Activated naive CD4-positive, alpha-beta T cell treated with anti-CD3 and anti-CD28 coated beads for 36 hours (primary cell): ENCODE measurements at regions of chr5 and their contacts with region 1.

Region 1: GRCh38 chr5:73160239-73160671 is 12.7 kb upstream of the TMEM174 start:
- DNase-seq: peak; percentile 95
- H3K4me3 Mint-ChIP-seq: no peak overlapping the region
- H3K27ac Mint-ChIP-seq: no peak overlapping the region
- H3K4me1 Mint-ChIP-seq: peaks cover 36% of the 10 kb centered on the region
- H3K27me3 Mint-ChIP-seq: peaks cover 78% of the 10 kb centered on the region

Region 2: DNA sequence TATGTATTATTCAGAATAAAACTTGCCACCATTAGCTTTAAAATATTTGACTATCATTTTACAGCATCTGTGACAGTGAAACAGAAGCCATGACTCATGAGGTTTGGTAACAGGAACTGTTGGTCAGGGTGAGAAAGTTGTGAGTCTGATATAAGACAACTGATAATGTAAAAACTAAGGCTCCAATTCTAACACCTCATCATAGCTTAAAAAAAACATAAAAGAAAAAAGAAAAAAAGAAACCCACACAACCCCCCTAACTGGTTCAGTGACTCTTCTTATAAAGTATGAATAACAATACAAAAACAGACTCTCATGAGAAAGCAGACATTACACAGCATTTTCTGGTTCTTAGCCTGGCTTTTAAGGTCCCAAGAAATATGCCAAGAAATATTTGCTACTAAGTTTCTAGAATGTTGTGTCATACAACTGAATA is 926.0 kb before region 1 on chr5:
- CTCF ChIA-PET with region 1: no interaction called
- intact Hi-C with region 1: loop called (anchors 5 kb)
- DNase-seq: peak; percentile 47
- H3K4me3 Mint-ChIP-seq: no peak overlapping the region
- H3K27ac Mint-ChIP-seq: peak overlapping the region; percentile 30
- H3K4me1 Mint-ChIP-seq: peaks cover 46% of the 10 kb centered on the region
- H3K27me3 Mint-ChIP-seq: no peaks in the 10 kb centered on the region

Region 3: GRCh38 chr5:72991394-72991793 is 168.9 kb before region 1 on chr5:
- CTCF ChIA-PET with region 1: no interaction called
- intact Hi-C with region 1: loop called (anchors 1 kb)
- DNase-seq: no peak
- H3K4me3 Mint-ChIP-seq: no peak overlapping the region
- H3K27ac Mint-ChIP-seq: no peak overlapping the region
- H3K4me1 Mint-ChIP-seq: no peaks in the 10 kb centered on the region
- H3K27me3 Mint-ChIP-seq: peaks cover 25% of the 10 kb centered on the region

Region 4: DNA sequence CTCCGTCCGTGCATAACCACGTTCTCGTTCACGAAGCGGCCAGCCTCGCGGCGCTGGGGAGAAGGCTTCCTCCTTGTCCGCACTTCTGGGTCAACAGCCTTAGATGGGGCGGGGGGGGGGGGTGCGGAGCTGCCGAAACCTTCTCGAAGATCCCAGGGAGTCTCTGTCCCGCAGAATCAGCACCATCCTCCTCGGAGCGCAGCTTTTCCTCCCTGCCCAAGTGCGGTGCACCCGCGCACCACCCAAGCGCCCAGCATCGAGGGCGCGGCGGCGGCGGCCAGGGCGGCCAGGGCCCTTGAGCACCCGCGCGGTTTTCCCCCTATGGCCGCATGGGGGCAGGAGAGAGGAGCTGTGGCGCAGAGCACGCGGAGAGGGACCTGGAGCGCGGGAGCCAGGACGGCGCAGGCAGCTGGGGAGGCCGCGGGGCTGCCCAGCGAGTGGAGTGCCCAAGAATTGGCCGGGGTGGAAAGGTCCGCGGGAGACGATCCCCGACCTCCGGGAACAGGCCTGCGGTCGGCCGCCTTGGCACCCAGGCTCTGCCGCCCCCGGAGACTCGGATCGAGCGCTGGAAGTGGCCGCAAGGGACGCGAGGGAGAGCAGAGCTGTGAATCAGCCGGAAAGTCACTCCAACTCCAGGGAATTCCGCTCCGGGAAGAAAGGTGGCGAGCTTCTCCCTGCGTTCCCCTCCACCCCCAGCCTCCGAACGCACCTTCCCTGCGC is 55.8 kb after region 1 on chr5:
- CTCF ChIA-PET with region 1: no interaction called
- intact Hi-C with region 1: loop called (anchors 1 kb)
- DNase-seq: peak; percentile 77
- H3K4me3 Mint-ChIP-seq: no peak overlapping the region
- H3K27ac Mint-ChIP-seq: no peak overlapping the region
- H3K4me1 Mint-ChIP-seq: peaks cover 17% of the 10 kb centered on the region
- H3K27me3 Mint-ChIP-seq: peaks cover 84% of the 10 kb centered on the region

Region 5: GRCh38 chr5:73498057-73499008 is 338.1 kb after region 1 on chr5 and contains the start of gene BTF3:
- CTCF ChIA-PET with region 1: no interaction called
- intact Hi-C with region 1: loop called (anchors 5 kb)
- DNase-seq: peak; percentile 95
- H3K4me3 Mint-ChIP-seq: peak within 1 kb of the TSS; percentile 97
- H3K27ac Mint-ChIP-seq: peak within 1 kb of the TSS; percentile 96
- H3K4me1 Mint-ChIP-seq: peaks cover 42% of the 10 kb centered on the region
- H3K27me3 Mint-ChIP-seq: peaks cover 3% of the 10 kb centered on the region
- total RNA-seq, gene BTF3: 1,100 to 1,123 TPM

Region 6: GRCh38 chr5:73994963-73995362 is 834.7 kb after region 1 on chr5:
- CTCF ChIA-PET with region 1: no interaction called
- intact Hi-C with region 1: no loop called
- DNase-seq: no peak
- H3K4me3 Mint-ChIP-seq: no peak overlapping the region
- H3K27ac Mint-ChIP-seq: no peak overlapping the region
- H3K4me1 Mint-ChIP-seq: no peaks in the 10 kb centered on the region
- H3K27me3 Mint-ChIP-seq: peaks cover 17% of the 10 kb centered on the region